ENCODE measurements at regions of chr3 and their contacts with region 1.

Region 1: DNA sequence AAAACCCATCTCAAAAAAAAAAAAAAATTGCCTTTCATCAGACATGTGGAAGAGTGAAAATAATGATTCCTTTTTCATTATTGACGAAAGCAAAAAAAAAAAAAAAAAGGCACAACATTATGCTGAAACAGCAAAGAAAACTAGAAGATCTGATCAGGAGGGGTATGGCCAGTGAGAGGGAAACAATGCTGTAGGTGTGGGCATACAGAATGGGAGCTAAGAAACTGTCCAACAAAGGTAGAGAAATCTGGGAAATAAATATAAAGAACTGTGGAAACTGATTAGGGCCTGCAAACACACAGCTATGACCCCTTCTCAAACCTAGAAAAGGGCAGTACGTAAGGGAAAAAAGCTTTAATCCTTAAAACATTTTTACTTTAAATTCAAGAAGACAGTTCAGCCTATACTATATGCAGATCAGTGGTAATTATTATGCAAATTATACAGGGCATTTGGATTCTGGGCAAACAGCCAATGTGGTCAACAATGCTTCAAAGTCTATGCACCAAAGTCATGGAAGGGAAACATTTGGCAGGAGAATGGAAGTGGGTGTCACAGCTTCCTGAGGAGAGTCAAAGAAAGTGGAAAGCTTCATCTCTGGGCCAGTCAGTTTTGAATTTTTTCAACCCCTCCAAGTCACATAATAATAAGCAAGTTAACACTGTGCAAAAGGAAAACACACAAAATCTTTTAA is 68.3 kb upstream of the SLC12A8 start:
- DNase-seq: peak; percentile 49
- ATAC-seq: no peak; the same call in 1 of the 2 replicates
- H3K4me3 ChIP-seq: no peak overlapping the region
- H3K27ac ChIP-seq: no peak overlapping the region
- H3K4me1 ChIP-seq: no peaks in the 10 kb centered on the region
- H3K27me3 ChIP-seq: no peaks in the 10 kb centered on the region
- CTCF ChIP-seq: no peak
- POLR2A ChIP-seq: no peak
- RAD21 ChIP-seq: no peak

Region 2: GRCh38 chr3:125202197-125202596 is 78.6 kb before region 1 on chr3:
- CTCF ChIA-PET with region 1: no interaction called
- POLR2A ChIA-PET with region 1: no interaction called
- dilution Hi-C with region 1: no loop called
- in situ Hi-C with region 1: no loop called
- intact Hi-C with region 1: no loop called
- DNase-seq: peak; percentile 25
- ATAC-seq: peak; percentile 67
- H3K4me3 ChIP-seq: no peak overlapping the region
- H3K27ac ChIP-seq: no peak overlapping the region
- H3K4me1 ChIP-seq: no peaks in the 10 kb centered on the region
- H3K27me3 ChIP-seq: 0 out of 2 replicates have a peak, but pooled peaks cover 2% of the 10 kb centered on the region
- CTCF ChIP-seq: peak; percentile 42
- POLR2A ChIP-seq: no peak
- RAD21 ChIP-seq: peak; percentile 71

Region 3: DNA sequence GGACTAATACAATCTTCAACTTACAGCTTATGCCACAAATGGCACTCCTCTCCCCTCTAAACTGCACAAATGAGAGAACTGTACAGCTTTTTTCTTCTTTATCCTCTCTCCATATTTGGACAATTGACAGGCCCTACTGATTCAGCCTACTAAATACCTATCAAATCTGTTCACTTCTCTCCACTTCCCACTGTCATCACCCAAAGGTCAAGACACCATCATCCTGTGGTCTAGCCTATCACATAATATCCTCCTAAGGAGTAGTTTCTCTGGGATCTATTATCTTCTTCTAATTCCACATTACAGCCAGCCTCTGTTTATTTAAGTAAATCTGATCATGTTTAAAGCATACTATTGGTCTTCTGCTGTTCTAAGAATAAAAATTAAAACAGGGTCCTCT is 35.3 kb before region 1 on chr3:
- CTCF ChIA-PET with region 1: no interaction called
- POLR2A ChIA-PET with region 1: no interaction called
- dilution Hi-C with region 1: no loop called
- in situ Hi-C with region 1: no loop called
- intact Hi-C with region 1: loop called (anchors 5 kb)
- DNase-seq: peak; percentile 83
- ATAC-seq: peak; percentile 57; the same call in 1 of the 2 replicates
- H3K4me3 ChIP-seq: no peak overlapping the region
- H3K27ac ChIP-seq: no peak overlapping the region
- H3K4me1 ChIP-seq: no peaks in the 10 kb centered on the region
- H3K27me3 ChIP-seq: no peaks in the 10 kb centered on the region
- CTCF ChIP-seq: no peak
- POLR2A ChIP-seq: no peak
- RAD21 ChIP-seq: no peak